MCF 10A (cell line): ENCODE measurements at regions of chr10 and their contacts with region 1.

Region 1: GRCh38 chr10:11782793-11783557 is 40.2 kb upstream of the PROSER2 start:
- DNase-seq: peak; percentile 73
- H3K4me3 Mint-ChIP-seq: no peak overlapping the region
- H3K27ac Mint-ChIP-seq: no peak overlapping the region
- H3K4me1 Mint-ChIP-seq: no peaks in the 10 kb centered on the region
- H3K27me3 Mint-ChIP-seq: no peaks in the 10 kb centered on the region
- CTCF ChIP-seq: peak; percentile 53

Region 2: GRCh38 chr10:11772575-11773288 is 10.2 kb before region 1 on chr10:
- CTCF ChIA-PET with region 1: interaction called, 19 read pairs
- POLR2A ChIA-PET with region 1: interaction called, 3 read pairs
- intact Hi-C with region 1: no loop called
- DNase-seq: no peak
- H3K4me3 Mint-ChIP-seq: no peak overlapping the region
- H3K27ac Mint-ChIP-seq: no peak overlapping the region
- H3K4me1 Mint-ChIP-seq: no peaks in the 10 kb centered on the region
- H3K27me3 Mint-ChIP-seq: no peaks in the 10 kb centered on the region
- CTCF ChIP-seq: no peak

Region 3: DNA sequence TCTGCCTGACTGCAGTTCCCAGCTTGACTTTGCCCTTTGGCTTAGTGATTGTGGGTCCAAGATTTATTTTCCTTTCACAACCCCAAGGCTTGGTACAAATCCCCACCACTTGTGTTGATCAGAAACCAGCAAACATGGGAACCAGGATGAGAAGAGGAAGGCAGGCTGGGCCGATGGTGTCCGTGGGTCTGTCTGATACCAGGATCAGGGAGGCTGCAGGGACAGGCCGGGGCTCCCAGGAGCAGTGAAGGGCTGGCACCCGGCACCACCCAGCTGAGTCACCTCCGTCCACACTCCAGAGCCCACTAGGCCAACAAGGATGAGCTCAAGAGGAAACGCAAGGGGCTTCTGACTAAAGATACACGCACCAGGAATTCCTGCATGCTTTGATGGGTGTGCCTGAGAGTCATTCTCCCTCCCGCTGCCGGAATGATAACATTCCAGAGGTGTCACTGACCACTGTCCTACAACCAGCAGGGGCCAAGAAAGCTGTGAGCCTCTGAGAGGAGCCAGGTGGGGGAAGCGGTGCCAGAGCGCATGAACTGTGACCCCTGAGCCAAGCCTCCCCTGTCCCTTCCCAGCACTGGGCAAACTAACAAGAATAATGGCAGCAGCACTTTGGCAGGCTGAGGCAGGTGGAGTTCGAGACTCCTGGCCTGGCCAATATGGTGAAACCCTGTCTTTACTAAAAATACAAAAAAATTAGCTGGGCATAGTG is 10.9 kb after region 1 on chr10:
- CTCF ChIA-PET with region 1: interaction called, 43 read pairs
- POLR2A ChIA-PET with region 1: interaction called, 3 read pairs
- intact Hi-C with region 1: no loop called
- DNase-seq: peak; percentile 55
- H3K4me3 Mint-ChIP-seq: no peak overlapping the region
- H3K27ac Mint-ChIP-seq: peak overlapping the region; percentile 21
- H3K4me1 Mint-ChIP-seq: peaks cover 17% of the 10 kb centered on the region
- H3K27me3 Mint-ChIP-seq: no peaks in the 10 kb centered on the region
- CTCF ChIP-seq: no peak

Region 4: GRCh38 chr10:12135631-12136030 is 352.7 kb after region 1 on chr10:
- CTCF ChIA-PET with region 1: no interaction called
- POLR2A ChIA-PET with region 1: no interaction called
- intact Hi-C with region 1: no loop called
- DNase-seq: no peak
- H3K4me3 Mint-ChIP-seq: no peak overlapping the region
- H3K27ac Mint-ChIP-seq: no peak overlapping the region
- H3K4me1 Mint-ChIP-seq: peaks cover under 1% of the 10 kb centered on the region
- H3K27me3 Mint-ChIP-seq: no peaks in the 10 kb centered on the region
- CTCF ChIP-seq: no peak